ENCODE measurements at regions of chr1 and their contacts with region 1.

Region 1: DNA sequence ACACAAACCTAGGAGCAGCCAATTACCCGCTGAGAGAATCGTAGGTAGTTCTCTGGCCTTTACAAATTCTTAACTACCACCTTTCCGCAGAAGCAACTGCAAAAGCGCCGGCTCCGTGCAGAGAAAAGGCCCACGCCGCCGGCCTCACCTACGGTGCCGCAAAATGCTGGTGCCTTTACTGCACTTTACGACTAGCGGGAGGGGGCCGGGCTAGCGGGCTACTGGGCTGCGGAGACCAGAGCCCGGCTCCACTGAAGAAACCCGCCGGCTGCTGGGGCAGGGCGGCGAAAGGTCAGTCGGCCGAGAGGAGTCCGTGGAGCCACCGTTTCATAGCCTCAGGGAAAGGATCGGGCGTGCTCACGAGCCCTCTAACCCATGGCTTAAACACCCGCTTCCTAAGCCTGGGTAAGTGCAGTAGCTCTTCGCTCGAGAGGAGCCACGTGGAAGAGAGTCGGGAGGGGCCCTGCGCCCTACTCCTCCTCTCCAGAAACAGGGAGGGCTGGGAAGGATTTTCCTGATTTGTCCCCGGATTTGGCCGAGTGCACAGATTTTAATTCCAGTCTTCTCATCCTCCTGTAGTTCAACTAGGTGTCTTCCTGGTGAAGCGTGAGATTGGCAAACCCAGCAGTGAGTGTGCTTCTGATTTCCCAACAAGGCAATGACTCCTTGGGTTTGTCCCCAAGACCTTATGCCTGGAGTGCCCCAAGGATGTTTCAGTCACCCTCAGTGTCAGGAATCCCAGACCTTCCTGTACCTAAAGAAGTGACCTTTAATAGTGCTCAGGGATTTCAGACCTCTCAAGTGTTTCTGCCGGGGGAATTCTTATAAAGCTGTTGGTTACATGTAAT is at the start of gene DPH5:
- DNase-seq: peak; percentile 73 to 91 (median 88)
- ATAC-seq: peak; percentile 95
- H3K4me3 ChIP-seq: peak within 1 kb of the TSS; percentile 75 to 96
- H3K4me3 Mint-ChIP-seq: peak within 1 kb of the TSS; percentile 90
- H3K27ac ChIP-seq: peak within 1 kb of the TSS; percentile 71 to 77
- H3K27ac Mint-ChIP-seq: peak within 1 kb of the TSS; percentile 98
- H3K4me1 ChIP-seq: peaks cover 52% of the 10 kb centered on the region
- H3K4me1 Mint-ChIP-seq: peaks cover 83% of the 10 kb centered on the region
- H3K27me3 ChIP-seq: no peaks in the 10 kb centered on the region
- H3K27me3 Mint-ChIP-seq: no peaks in the 10 kb centered on the region
- CTCF ChIP-seq: no peak
- total RNA-seq, gene DPH5: 32.1 to 40.7 TPM

Region 2: DNA sequence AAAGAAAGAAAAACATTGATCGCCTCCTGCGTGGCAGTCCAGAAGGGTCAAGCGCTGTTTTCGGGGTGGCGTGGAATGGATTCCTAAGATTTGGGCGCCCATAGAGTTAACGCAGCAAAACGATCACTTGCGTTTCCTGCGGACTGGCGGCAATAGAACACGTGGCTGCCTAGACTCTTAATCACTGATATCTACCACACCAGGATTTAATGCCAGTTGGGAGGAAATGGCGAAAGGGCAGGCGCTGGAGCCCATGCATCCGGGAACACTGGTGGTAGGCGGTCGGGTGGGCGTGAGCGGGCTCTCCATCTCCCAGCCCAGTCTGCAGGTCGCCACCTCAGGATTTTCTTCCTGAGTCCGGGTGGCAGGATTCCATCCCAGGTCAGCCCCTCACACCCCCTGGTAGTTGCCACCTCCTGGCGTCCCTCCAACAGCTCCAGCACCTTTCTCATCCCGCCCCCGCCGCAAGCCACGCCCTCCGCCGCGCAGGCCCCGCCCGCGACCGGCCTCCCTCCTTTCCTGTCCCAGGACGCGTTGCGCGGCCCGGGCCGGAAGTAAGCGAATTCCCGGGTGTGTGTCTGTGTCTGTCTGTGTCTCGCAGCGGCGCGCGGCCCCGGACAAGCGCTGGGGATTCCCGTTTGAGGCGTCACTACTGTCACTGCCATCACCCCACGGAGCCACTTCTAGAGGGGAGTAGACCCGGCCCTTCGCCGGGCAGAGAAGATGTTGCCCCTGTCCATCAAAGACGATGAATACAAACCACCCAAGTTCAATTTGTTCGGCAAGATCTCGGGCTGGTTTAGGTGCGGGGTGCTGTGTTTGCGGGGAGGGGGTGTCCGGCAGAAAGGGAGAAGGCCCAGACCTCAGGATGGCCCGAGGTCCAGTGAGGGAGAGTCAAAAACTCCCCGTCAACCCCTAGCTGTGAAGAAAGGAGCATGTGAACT is 130.1 kb before region 1 on chr1 and contains the start of gene SLC30A7:
- CTCF ChIA-PET with region 1: no interaction called
- POLR2A ChIA-PET with region 1: no interaction called
- intact Hi-C with region 1: loop called in 1 of 2 experiments (anchors 5 kb)
- DNase-seq: peak; percentile 91 to 98 (median 96)
- ATAC-seq: peak; percentile 72
- H3K4me3 ChIP-seq: peak within 1 kb of the TSS; percentile 92 to 98
- H3K4me3 Mint-ChIP-seq: peak within 1 kb of the TSS; percentile 100
- H3K27ac ChIP-seq: peak within 1 kb of the TSS; percentile 85 to 99
- H3K27ac Mint-ChIP-seq: peak within 1 kb of the TSS; percentile 100
- H3K4me1 ChIP-seq: peaks cover 20% of the 10 kb centered on the region
- H3K4me1 Mint-ChIP-seq: peaks cover 49% of the 10 kb centered on the region
- H3K27me3 ChIP-seq: no peaks in the 10 kb centered on the region
- H3K27me3 Mint-ChIP-seq: no peaks in the 10 kb centered on the region
- CTCF ChIP-seq: no peak
- total RNA-seq, gene SLC30A7: 18.8 to 20.2 TPM

Region 3: GRCh38 chr1:100959502-100960060 is 66.3 kb before region 1 on chr1:
- CTCF ChIA-PET with region 1: no interaction called
- POLR2A ChIA-PET with region 1: no interaction called
- intact Hi-C with region 1: no loop called
- DNase-seq: no peak
- ATAC-seq: no peak
- H3K4me3 ChIP-seq: no peak overlapping the region
- H3K4me3 Mint-ChIP-seq: no peak overlapping the region
- H3K27ac ChIP-seq: no peak overlapping the region
- H3K27ac Mint-ChIP-seq: peak overlapping the region; percentile 28
- H3K4me1 ChIP-seq: no peaks in the 10 kb centered on the region
- H3K4me1 Mint-ChIP-seq: peaks cover 52% of the 10 kb centered on the region
- H3K27me3 ChIP-seq: no peaks in the 10 kb centered on the region
- H3K27me3 Mint-ChIP-seq: no peaks in the 10 kb centered on the region
- CTCF ChIP-seq: no peak

Region 4: GRCh38 chr1:100989306-100990077 is 36.4 kb before region 1 on chr1:
- CTCF ChIA-PET with region 1: no interaction called
- POLR2A ChIA-PET with region 1: interaction called, 3 read pairs
- intact Hi-C with region 1: loop called in 1 of 2 experiments (anchors 5 kb)
- DNase-seq: no peak
- ATAC-seq: no peak
- H3K4me3 ChIP-seq: no peak overlapping the region
- H3K4me3 Mint-ChIP-seq: no peak overlapping the region
- H3K27ac ChIP-seq: no peak overlapping the region
- H3K27ac Mint-ChIP-seq: peak overlapping the region; percentile 80
- H3K4me1 ChIP-seq: peaks cover 2% of the 10 kb centered on the region
- H3K4me1 Mint-ChIP-seq: peaks cover 21% of the 10 kb centered on the region
- H3K27me3 ChIP-seq: no peaks in the 10 kb centered on the region
- H3K27me3 Mint-ChIP-seq: no peaks in the 10 kb centered on the region
- CTCF ChIP-seq: no peak

Region 5: GRCh38 chr1:101060992-101061391 is 35.1 kb after region 1 on chr1:
- CTCF ChIA-PET with region 1: no interaction called
- POLR2A ChIA-PET with region 1: no interaction called
- intact Hi-C with region 1: loop called in 1 of 2 experiments (anchors 5 kb)
- DNase-seq: no peak
- ATAC-seq: no peak
- H3K4me3 ChIP-seq: no peak overlapping the region
- H3K4me3 Mint-ChIP-seq: no peak overlapping the region
- H3K27ac ChIP-seq: no peak overlapping the region
- H3K27ac Mint-ChIP-seq: no peak overlapping the region
- H3K4me1 ChIP-seq: peaks cover 12% of the 10 kb centered on the region
- H3K4me1 Mint-ChIP-seq: peaks cover 32% of the 10 kb centered on the region
- H3K27me3 ChIP-seq: no peaks in the 10 kb centered on the region
- H3K27me3 Mint-ChIP-seq: no peaks in the 10 kb centered on the region
- CTCF ChIP-seq: no peak

Region 6: GRCh38 chr1:101357444-101357986 is 331.6 kb after region 1 on chr1:
- CTCF ChIA-PET with region 1: no interaction called
- POLR2A ChIA-PET with region 1: no interaction called
- intact Hi-C with region 1: loop called in 1 of 2 experiments (anchors 10 kb)
- DNase-seq: peak; percentile 38 to 92 (median 67)
- ATAC-seq: peak; percentile 100
- H3K4me3 ChIP-seq: no peak overlapping the region
- H3K4me3 Mint-ChIP-seq: no peak overlapping the region
- H3K27ac ChIP-seq: no peak overlapping the region
- H3K27ac Mint-ChIP-seq: peak overlapping the region; percentile 28
- H3K4me1 ChIP-seq: peaks cover 6% of the 10 kb centered on the region
- H3K4me1 Mint-ChIP-seq: peaks cover 8% of the 10 kb centered on the region
- H3K27me3 ChIP-seq: no peaks in the 10 kb centered on the region
- H3K27me3 Mint-ChIP-seq: peaks cover 3% of the 10 kb centered on the region
- CTCF ChIP-seq: peak; percentile 87

Measured in CD8-positive, alpha-beta T cell (primary cell).